Psoas muscle (tissue), 8 donors: ENCODE measurements at regions of chr19 and their contacts with region 1.

Region 1: DNA sequence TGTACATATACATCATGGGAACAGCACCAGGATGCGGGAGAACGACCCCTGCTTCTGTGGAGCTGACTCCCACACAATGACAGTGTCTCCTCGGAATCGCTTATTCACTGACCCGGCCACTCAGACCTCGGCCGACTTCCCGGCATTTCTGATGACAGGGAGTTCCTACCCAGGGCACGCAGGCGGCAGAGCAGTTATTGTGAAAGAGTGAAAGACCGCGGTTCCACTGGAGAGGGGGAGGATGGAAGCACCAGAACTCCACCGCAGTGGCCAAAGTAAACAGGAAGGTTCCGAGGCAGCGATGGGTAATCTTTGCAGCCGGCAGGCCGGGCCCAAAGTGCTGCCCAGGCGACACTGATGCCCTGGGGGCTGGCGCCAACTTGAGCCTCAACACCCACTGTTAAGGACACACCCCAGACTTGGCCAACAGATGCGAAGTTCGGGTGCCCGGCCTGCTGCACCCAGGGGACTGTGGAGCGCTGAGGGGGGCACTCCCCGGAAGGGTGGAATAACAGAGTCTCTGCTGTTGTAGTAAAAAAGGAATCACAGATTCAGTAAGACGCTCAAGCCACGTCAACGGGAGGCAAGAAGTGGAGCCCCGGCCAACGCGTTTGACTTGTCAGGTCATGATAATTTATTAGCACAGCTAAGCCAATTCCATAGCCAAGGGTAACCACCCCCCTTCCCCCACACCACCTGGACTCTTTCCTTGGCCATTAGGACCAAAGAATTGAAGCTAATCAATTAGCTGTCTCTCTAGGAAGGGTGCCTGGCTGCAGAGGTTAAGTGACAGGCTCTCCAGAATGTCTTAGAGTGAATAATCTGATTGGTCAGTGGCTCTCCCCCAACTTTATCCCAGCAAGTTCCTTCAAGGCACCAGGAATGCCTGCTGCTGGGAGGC is 5.8 kb downstream of the MLLT1 start:
- DNase-seq: peak; percentile 90 to 93
- ATAC-seq: peak; percentile 84 to 88 (median 85)
- H3K4me3 ChIP-seq: peak overlapping the region; percentile 56
- H3K27ac ChIP-seq: peak overlapping the region; percentile 94
- H3K4me1 ChIP-seq: peaks cover 84% of the 10 kb centered on the region
- H3K27me3 ChIP-seq: no peaks in the 10 kb centered on the region
- CTCF ChIP-seq: no peak

Region 2: GRCh38 chr19:6238643-6239281 is 35.2 kb before region 1 on chr19:
- intact Hi-C with region 1: loop called in 1 of 2 experiments (anchors 2 kb)
- DNase-seq: peak; percentile 74 to 88
- ATAC-seq: peak; percentile 76 to 89 (median 82)
- H3K4me3 ChIP-seq: peak overlapping the region; percentile 26
- H3K27ac ChIP-seq: peak overlapping the region; percentile 92
- H3K4me1 ChIP-seq: peaks cover 77% of the 10 kb centered on the region
- H3K27me3 ChIP-seq: no peaks in the 10 kb centered on the region
- CTCF ChIP-seq: no peak